Naive thymus-derived CD4-positive, alpha-beta T cell (primary cell): ENCODE measurements at regions of chr2 and their contacts with region 1.

Region 1: DNA sequence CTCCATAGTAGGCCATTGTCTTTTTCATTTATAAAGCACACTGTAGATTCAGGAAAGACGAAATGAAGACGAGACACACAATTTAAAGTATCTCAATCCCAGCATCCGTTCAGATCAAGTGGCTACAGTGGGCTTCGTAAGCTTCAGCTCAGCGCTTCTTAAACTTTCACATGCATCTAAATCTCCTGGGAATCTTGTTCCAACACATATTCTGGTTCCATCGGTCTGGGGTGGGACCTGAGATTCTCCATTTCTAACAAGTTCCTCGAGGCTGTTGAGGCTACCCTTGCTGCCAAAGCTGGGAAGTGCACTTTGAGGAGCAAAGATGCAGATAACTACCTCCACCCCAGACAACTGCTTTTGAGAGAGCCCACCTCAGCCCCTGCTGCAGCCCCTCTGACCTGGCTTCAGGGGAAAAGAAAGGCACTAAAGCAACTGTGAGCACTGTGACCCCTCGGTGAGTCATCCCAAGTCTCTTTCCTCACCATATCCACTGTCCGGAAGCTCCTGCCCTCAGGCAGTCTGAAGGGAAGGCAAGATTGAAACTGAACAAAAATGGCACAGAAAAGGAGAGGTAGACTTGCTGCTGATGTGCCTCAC is 201.1 kb upstream of the FBXO11 start:
- DNase-seq: no peak
- ATAC-seq: no peak
- H3K4me3 ChIP-seq: no peak overlapping the region
- H3K4me3 Mint-ChIP-seq: no peak overlapping the region
- H3K27ac ChIP-seq: no peak overlapping the region
- H3K27ac Mint-ChIP-seq: no peak overlapping the region
- H3K4me1 ChIP-seq: peaks cover 0 to 3% of the 10 kb centered on the region in 2 donors
- H3K4me1 Mint-ChIP-seq: peaks cover 4 to 26% (median 17%) of the 10 kb centered on the region in 7 donors
- H3K27me3 ChIP-seq: no peaks in the 10 kb centered on the region
- H3K27me3 Mint-ChIP-seq: peaks cover 0 to 9% (median 0%) of the 10 kb centered on the region in 5 donors

Region 2: GRCh38 chr2:47336259-47337238 is 770.9 kb before region 1 on chr2:
- CTCF ChIA-PET with region 1: interaction called, 3 read pairs
- POLR2A ChIA-PET with region 1: no interaction called
- intact Hi-C with region 1: loop called in 1 of 2 experiments (anchors 2 kb)
- DNase-seq: no peak
- ATAC-seq: peak; percentile 63
- H3K4me3 ChIP-seq: no peak overlapping the region
- H3K4me3 Mint-ChIP-seq: no peak overlapping the region
- H3K27ac ChIP-seq: no peak overlapping the region
- H3K27ac Mint-ChIP-seq: peak overlapping the region in 1 of 9 donors; percentile 73
- H3K4me1 ChIP-seq: no peaks in the 10 kb centered on the region
- H3K4me1 Mint-ChIP-seq: peaks cover 0 to 4% (median 0%) of the 10 kb centered on the region in 7 donors
- H3K27me3 ChIP-seq: no peaks in the 10 kb centered on the region
- H3K27me3 Mint-ChIP-seq: peaks cover 0 to 18% (median 5%) of the 10 kb centered on the region in 5 donors

Region 3: GRCh38 chr2:47402805-47403608 is 704.4 kb before region 1 on chr2 and contains the start of gene MSH2:
- CTCF ChIA-PET with region 1: no interaction called
- POLR2A ChIA-PET with region 1: no interaction called
- intact Hi-C with region 1: loop called in 1 of 2 experiments (anchors 5 kb)
- DNase-seq: peak; percentile 72 to 94 (median 91)
- ATAC-seq: peak; percentile 97
- H3K4me3 ChIP-seq: peak within 1 kb of the TSS; percentile 90
- H3K4me3 Mint-ChIP-seq: peak within 1 kb of the TSS; percentile 90 to 100 (median 98)
- H3K27ac ChIP-seq: peak within 1 kb of the TSS; percentile 77
- H3K27ac Mint-ChIP-seq: peak within 1 kb of the TSS; percentile 81 to 96 (median 91)
- H3K4me1 ChIP-seq: peaks cover 9 to 12% of the 10 kb centered on the region in 2 donors
- H3K4me1 Mint-ChIP-seq: peaks cover 32 to 49% (median 40%) of the 10 kb centered on the region in 7 donors
- H3K27me3 ChIP-seq: no peaks in the 10 kb centered on the region
- H3K27me3 Mint-ChIP-seq: peaks cover 0 to 2% (median 0%) of the 10 kb centered on the region in 5 donors
- total RNA-seq, gene MSH2: 12.2 to 44.7 (median 31.4) TPM

Region 4: GRCh38 chr2:47520825-47521665 is 586.4 kb before region 1 on chr2:
- CTCF ChIA-PET with region 1: no interaction called
- POLR2A ChIA-PET with region 1: no interaction called
- intact Hi-C with region 1: loop called in 1 of 2 experiments (anchors 1 kb)
- DNase-seq: peak; percentile 43 to 79 (median 63)
- ATAC-seq: peak; percentile 91
- H3K4me3 ChIP-seq: peak overlapping the region; percentile 74
- H3K4me3 Mint-ChIP-seq: peak overlapping the region; percentile 90 to 99 (median 95)
- H3K27ac ChIP-seq: peak overlapping the region; percentile 15
- H3K27ac Mint-ChIP-seq: peak overlapping the region; percentile 82 to 96 (median 90)
- H3K4me1 ChIP-seq: peaks cover 0 to 4% of the 10 kb centered on the region in 2 donors
- H3K4me1 Mint-ChIP-seq: peaks cover 5 to 21% (median 20%) of the 10 kb centered on the region in 7 donors
- H3K27me3 ChIP-seq: no peaks in the 10 kb centered on the region
- H3K27me3 Mint-ChIP-seq: peaks cover 0 to 4% (median 0%) of the 10 kb centered on the region in 5 donors

Region 5: DNA sequence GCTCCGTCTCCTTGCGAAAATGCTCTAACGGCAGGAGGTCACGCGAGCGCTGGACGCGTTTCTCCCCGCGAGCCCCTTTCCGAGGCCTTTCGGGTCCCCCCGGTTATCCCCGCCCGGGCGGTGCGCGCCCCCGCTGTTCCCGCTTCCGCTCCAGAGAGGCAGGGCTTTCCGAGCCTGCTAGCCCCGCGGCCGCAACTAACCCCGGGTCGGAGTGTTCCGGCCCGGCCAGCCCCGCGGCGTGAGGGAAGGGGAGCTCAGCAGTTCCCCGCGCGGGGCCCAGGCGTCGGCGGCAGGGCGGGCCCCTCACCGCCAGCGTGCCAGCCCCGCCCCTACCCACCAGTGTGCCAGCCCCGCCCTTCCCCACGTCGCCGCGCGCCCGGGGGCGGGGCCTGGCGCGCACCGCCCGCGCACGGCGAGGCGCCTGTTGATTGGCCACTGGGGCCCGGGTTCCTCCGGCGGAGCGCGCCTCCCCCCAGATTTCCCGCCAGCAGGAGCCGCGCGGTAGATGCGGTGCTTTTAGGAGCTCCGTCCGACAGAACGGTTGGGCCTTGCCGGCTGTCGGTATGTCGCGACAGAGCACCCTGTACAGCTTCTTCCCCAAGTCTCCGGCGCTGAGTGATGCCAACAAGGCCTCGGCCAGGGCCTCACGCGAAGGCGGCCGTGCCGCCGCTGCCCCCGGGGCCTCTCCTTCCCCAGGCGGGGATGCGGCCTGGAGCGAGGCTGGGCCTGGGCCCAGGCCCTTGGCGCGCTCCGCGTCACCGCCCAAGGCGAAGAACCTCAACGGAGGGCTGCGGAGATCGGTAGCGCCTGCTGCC is 324.5 kb before region 1 on chr2 and contains the start of gene MSH6:
- CTCF ChIA-PET with region 1: no interaction called
- POLR2A ChIA-PET with region 1: no interaction called
- intact Hi-C with region 1: loop called (anchors 1 kb)
- DNase-seq: peak; percentile 85 to 93 (median 92)
- ATAC-seq: peak; percentile 97
- H3K4me3 ChIP-seq: peak within 1 kb of the TSS; percentile 97
- H3K4me3 Mint-ChIP-seq: peak within 1 kb of the TSS; percentile 70 to 97 (median 92)
- H3K27ac ChIP-seq: peak within 1 kb of the TSS; percentile 94
- H3K27ac Mint-ChIP-seq: peak within 1 kb of the TSS; percentile 62 to 93 (median 87)
- H3K4me1 ChIP-seq: peaks cover 5 to 8% of the 10 kb centered on the region in 2 donors
- H3K4me1 Mint-ChIP-seq: peaks cover 7 to 39% (median 24%) of the 10 kb centered on the region in 7 donors
- H3K27me3 ChIP-seq: no peaks in the 10 kb centered on the region
- H3K27me3 Mint-ChIP-seq: no peaks in the 10 kb centered on the region
- total RNA-seq, gene MSH6: 20.5 to 82.3 (median 41.8) TPM

Region 6: GRCh38 chr2:47862949-47863348 is 244.5 kb before region 1 on chr2:
- CTCF ChIA-PET with region 1: interaction called, 27 read pairs
- POLR2A ChIA-PET with region 1: no interaction called
- intact Hi-C with region 1: loop called in 1 of 2 experiments (anchors 1 kb)
- DNase-seq: no peak
- ATAC-seq: no peak
- H3K4me3 ChIP-seq: no peak overlapping the region
- H3K4me3 Mint-ChIP-seq: no peak overlapping the region
- H3K27ac ChIP-seq: no peak overlapping the region
- H3K27ac Mint-ChIP-seq: peak overlapping the region in 6 of 9 donors; percentile 1 to 61 (median 26)
- H3K4me1 ChIP-seq: peaks cover 0 to 15% of the 10 kb centered on the region in 2 donors
- H3K4me1 Mint-ChIP-seq: peaks cover 25 to 87% (median 76%) of the 10 kb centered on the region in 7 donors
- H3K27me3 ChIP-seq: no peaks in the 10 kb centered on the region
- H3K27me3 Mint-ChIP-seq: no peaks in the 10 kb centered on the region